Activated CD4-positive, alpha-beta memory T cell treated with anti-CD3 and anti-CD28 coated beads for 36 hours (primary cell): ENCODE measurements at regions of chr15 and their contacts with region 1.

Region 1: DNA sequence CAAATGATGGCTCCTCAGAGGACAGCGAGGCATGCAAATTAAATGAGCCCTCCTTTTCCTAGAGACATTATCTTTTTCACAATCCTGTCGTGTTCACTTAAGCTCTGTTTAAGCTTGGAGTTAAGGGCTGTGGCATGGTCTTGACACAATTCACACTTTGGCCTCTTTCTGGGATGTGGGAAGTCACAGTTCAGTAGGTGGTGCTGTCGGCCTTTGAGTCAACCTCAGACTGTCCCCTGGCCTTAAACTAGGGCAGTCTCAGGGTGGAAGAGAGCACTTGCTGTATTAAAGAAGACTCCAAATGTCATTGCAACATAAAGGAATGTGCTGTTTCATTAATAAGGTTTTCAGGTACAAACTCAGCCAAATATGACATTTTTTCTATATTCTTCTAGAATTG is 351.0 kb downstream of the MCTP2 start:
- DNase-seq: peak; percentile 59
- H3K4me3 Mint-ChIP-seq: no peak overlapping the region
- H3K27ac Mint-ChIP-seq: no peak overlapping the region
- H3K4me1 Mint-ChIP-seq: peaks cover 31% of the 10 kb centered on the region
- H3K27me3 Mint-ChIP-seq: peaks cover 54% of the 10 kb centered on the region

Region 2: DNA sequence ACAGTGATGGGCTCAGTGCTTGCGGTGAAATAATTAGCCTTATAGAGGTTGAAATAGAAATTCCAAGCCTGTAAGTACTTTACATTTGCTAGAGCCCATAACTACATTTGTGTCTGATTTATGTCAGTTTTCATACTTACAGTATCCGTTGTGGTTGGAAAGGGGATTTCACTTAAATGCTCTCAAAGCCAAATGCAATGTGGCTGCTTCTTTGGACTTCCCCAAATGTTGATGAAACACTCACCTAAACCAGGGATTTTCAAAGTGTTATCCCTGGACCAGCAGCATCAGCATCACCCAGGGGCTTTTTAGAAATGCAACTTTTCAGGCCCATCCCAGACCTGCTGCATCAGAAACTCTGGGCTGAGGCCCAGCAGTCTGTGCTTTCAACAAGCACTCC is 27.7 kb after region 1 on chr15:
- CTCF ChIA-PET with region 1: no interaction called
- POLR2A ChIA-PET with region 1: no interaction called
- intact Hi-C with region 1: loop called (anchors 1 kb)
- DNase-seq: no peak
- H3K4me3 Mint-ChIP-seq: no peak overlapping the region
- H3K27ac Mint-ChIP-seq: no peak overlapping the region
- H3K4me1 Mint-ChIP-seq: peaks cover 10% of the 10 kb centered on the region
- H3K27me3 Mint-ChIP-seq: peaks cover 33% of the 10 kb centered on the region

Region 3: GRCh38 chr15:95025924-95026728 is 443.8 kb after region 1 on chr15:
- CTCF ChIA-PET with region 1: no interaction called
- POLR2A ChIA-PET with region 1: no interaction called
- intact Hi-C with region 1: loop called (anchors 10 kb)
- DNase-seq: peak; percentile 18
- H3K4me3 Mint-ChIP-seq: no peak overlapping the region
- H3K27ac Mint-ChIP-seq: no peak overlapping the region
- H3K4me1 Mint-ChIP-seq: no peaks in the 10 kb centered on the region
- H3K27me3 Mint-ChIP-seq: no peaks in the 10 kb centered on the region

Region 4: DNA sequence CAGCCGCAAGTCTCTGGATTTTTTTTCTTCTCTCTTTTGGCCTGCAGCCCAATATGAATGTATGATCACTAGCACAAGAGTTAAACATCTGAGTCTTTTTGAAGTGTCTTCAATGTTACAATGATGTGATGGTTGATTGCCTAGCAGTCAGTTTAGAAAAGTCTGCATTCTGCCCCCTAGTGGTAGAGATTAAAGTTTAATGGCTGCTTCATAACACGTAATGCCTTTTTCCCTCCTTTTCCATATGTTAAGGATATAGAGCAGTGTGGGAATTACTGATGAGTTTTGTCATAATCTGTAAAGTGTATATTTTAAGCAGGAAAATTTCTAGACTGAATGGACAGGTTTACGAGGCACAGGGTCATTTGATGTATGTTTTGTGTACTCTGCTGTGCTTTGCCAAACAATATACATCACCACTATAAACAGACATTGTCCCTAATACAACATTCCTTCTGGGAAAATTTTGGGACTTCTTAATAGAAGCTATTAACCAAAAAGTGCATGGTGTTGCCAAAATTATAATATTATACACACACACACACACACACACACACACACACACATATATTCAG is 709.6 kb after region 1 on chr15:
- CTCF ChIA-PET with region 1: interaction called, 5 read pairs
- POLR2A ChIA-PET with region 1: no interaction called
- intact Hi-C with region 1: loop called (anchors 2 kb)
- DNase-seq: no peak
- H3K4me3 Mint-ChIP-seq: no peak overlapping the region
- H3K27ac Mint-ChIP-seq: no peak overlapping the region
- H3K4me1 Mint-ChIP-seq: no peaks in the 10 kb centered on the region
- H3K27me3 Mint-ChIP-seq: peaks cover 17% of the 10 kb centered on the region

Region 5: GRCh38 chr15:96345560-96346399 is 1763.4 kb after region 1 on chr15:
- CTCF ChIA-PET with region 1: no interaction called
- POLR2A ChIA-PET with region 1: no interaction called
- intact Hi-C with region 1: loop called (anchors 10 kb)
- DNase-seq: no peak
- H3K4me3 Mint-ChIP-seq: no peak overlapping the region
- H3K27ac Mint-ChIP-seq: no peak overlapping the region
- H3K4me1 Mint-ChIP-seq: peaks cover 4% of the 10 kb centered on the region
- H3K27me3 Mint-ChIP-seq: peaks cover 88% of the 10 kb centered on the region